K562 (cell line): ENCODE measurements at regions of chr2 and their contacts with region 1.

Region 1: GRCh38 chr2:120252225-120253021 is at the start of gene RALB:
- DNase-seq: peak; percentile 96 to 99 (median 98)
- ATAC-seq: peak; percentile 93
- H3K4me3 ChIP-seq: peak within 1 kb of the TSS; percentile 76
- H3K27ac ChIP-seq: peak within 1 kb of the TSS; percentile 75
- H3K4me1 ChIP-seq: peaks cover 23 to 25% of the 10 kb centered on the region in 2 experiments
- H3K27me3 ChIP-seq: peaks cover 0 to 6% of the 10 kb centered on the region in 2 experiments; a peak in 3 of 5 replicates
- CTCF ChIP-seq: no peak
- EP300 ChIP-seq: no peak; the same call in 1 of the 2 replicates
- POLR2A ChIP-seq: peak; percentile 64; the same call in 1 of the 2 replicates
- RAD21 ChIP-seq: 0 out of 4 replicates have a peak, but pooled peaks of 1 of the 2 experiments have one; percentile 5
- polyA plus RNA-seq, gene RALB: 14.8 to 29.9 TPM

Region 2: GRCh38 chr2:120223034-120223912 is 29.1 kb before region 1 on chr2 and contains the start of gene TMEM185B:
- CTCF ChIA-PET with region 1: no interaction called
- POLR2A ChIA-PET with region 1: interaction called, 7 read pairs
- in situ Hi-C with region 1: no loop called
- intact Hi-C with region 1: loop called (anchors 1 kb)
- DNase-seq: peak; percentile 87 to 98 (median 96)
- ATAC-seq: peak; percentile 94
- H3K4me3 ChIP-seq: peak within 1 kb of the TSS; percentile 59
- H3K27ac ChIP-seq: peak within 1 kb of the TSS; percentile 96
- H3K4me1 ChIP-seq: peaks cover 30 to 37% of the 10 kb centered on the region in 2 experiments
- H3K27me3 ChIP-seq: no peaks in the 10 kb centered on the region; a peak in 1 of 5 replicates
- CTCF ChIP-seq: peak in 2 of 3 experiments; percentile 33 to 49; a peak in 4 of 6 replicates
- EP300 ChIP-seq: no peak
- POLR2A ChIP-seq: peak; percentile 86
- RAD21 ChIP-seq: peak in 1 of 2 experiments; percentile 28; a peak in 3 of 4 replicates
- polyA plus RNA-seq, gene TMEM185B: 2.9 to 3.2 TPM

Region 3: DNA sequence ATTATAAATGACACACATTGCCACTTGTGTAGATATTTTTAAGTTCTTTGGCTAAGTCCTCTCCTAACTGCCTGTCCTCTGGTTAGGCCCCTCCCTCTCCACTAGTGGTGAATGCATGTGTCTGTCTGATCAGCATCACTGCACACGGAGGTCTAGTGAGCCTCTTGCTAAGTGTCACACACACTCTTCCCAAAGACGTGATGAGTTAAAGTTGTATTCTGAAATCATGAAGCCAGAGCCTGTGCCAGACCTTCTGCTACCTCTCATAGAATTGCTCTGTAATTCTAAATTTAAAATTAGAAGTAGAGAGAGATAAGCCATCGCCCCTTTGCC is 41.6 kb after region 1 on chr2:
- CTCF ChIA-PET with region 1: no interaction called
- POLR2A ChIA-PET with region 1: interaction called, 3 read pairs
- in situ Hi-C with region 1: no loop called
- intact Hi-C with region 1: loop called (anchors 2 kb)
- DNase-seq: no peak
- ATAC-seq: no peak
- H3K4me3 ChIP-seq: no peak overlapping the region
- H3K27ac ChIP-seq: no peak overlapping the region
- H3K4me1 ChIP-seq: peaks cover 9 to 23% of the 10 kb centered on the region in 2 experiments; a peak in 4 of 5 replicates
- H3K27me3 ChIP-seq: no peaks in the 10 kb centered on the region
- CTCF ChIP-seq: no peak
- EP300 ChIP-seq: no peak
- POLR2A ChIP-seq: no peak
- RAD21 ChIP-seq: no peak